ENCODE measurements at regions of chr5 and their contacts with region 1.

Region 1: GRCh38 chr5:147453875-147454814 is 55.7 kb downstream of the DPYSL3 start:
- DNase-seq: no peak
- H3K4me3 ChIP-seq: peak overlapping the region; percentile 88 to 98 (median 93)
- H3K27ac ChIP-seq: peak overlapping the region; percentile 95 to 99 (median 98)
- H3K4me1 ChIP-seq: peaks cover 31 to 78% (median 66%) of the 10 kb centered on the region in 4 donors
- H3K27me3 ChIP-seq: no peaks in the 10 kb centered on the region
- CTCF ChIP-seq: peak; percentile 79 to 96 (median 94)
- EP300 ChIP-seq: no peak
- POLR2A ChIP-seq: no peak

Region 2: GRCh38 chr5:147339313-147339712 is 114.8 kb before region 1 on chr5:
- intact Hi-C with region 1: no loop called
- DNase-seq: no peak
- H3K4me3 ChIP-seq: no peak overlapping the region
- H3K27ac ChIP-seq: no peak overlapping the region
- H3K4me1 ChIP-seq: no peaks in the 10 kb centered on the region
- H3K27me3 ChIP-seq: no peaks in the 10 kb centered on the region
- CTCF ChIP-seq: no peak
- EP300 ChIP-seq: no peak
- POLR2A ChIP-seq: no peak

Region 3: GRCh38 chr5:147403651-147404640 is 50.2 kb before region 1 on chr5:
- intact Hi-C with region 1: loop called (anchors 2 kb)
- DNase-seq: peak; percentile 93
- H3K4me3 ChIP-seq: peak overlapping the region in 2 of 4 donors; percentile 12 to 24
- H3K27ac ChIP-seq: peak overlapping the region; percentile 85 to 96 (median 92)
- H3K4me1 ChIP-seq: peaks cover 46 to 79% (median 65%) of the 10 kb centered on the region in 4 donors
- H3K27me3 ChIP-seq: no peaks in the 10 kb centered on the region
- CTCF ChIP-seq: no peak
- EP300 ChIP-seq: peak; percentile 67
- POLR2A ChIP-seq: no peak

Region 4: GRCh38 chr5:147509710-147510651 is 55.8 kb after region 1 on chr5 and contains the start of gene DPYSL3:
- intact Hi-C with region 1: loop called (anchors 2 kb)
- DNase-seq: peak; percentile 92
- H3K4me3 ChIP-seq: peak within 1 kb of the TSS; percentile 67 to 94 (median 86)
- H3K27ac ChIP-seq: peak within 1 kb of the TSS; percentile 90 to 98 (median 92)
- H3K4me1 ChIP-seq: peaks cover 4 to 34% (median 32%) of the 10 kb centered on the region in 4 donors
- H3K27me3 ChIP-seq: no peaks in the 10 kb centered on the region
- CTCF ChIP-seq: peak; percentile 33 to 58 (median 34)
- EP300 ChIP-seq: no peak
- POLR2A ChIP-seq: no peak
- total RNA-seq, gene DPYSL3: 295 to 449 (median 378) TPM

Region 5: GRCh38 chr5:147558826-147559225 is 104.7 kb after region 1 on chr5:
- intact Hi-C with region 1: loop called (anchors 1 kb)
- DNase-seq: no peak
- H3K4me3 ChIP-seq: no peak overlapping the region
- H3K27ac ChIP-seq: peak overlapping the region; percentile 62 to 87 (median 65)
- H3K4me1 ChIP-seq: peaks cover 12 to 41% (median 37%) of the 10 kb centered on the region in 4 donors
- H3K27me3 ChIP-seq: no peaks in the 10 kb centered on the region
- CTCF ChIP-seq: peak; percentile 79 to 82 (median 82)
- EP300 ChIP-seq: no peak
- POLR2A ChIP-seq: no peak

Region 6: DNA sequence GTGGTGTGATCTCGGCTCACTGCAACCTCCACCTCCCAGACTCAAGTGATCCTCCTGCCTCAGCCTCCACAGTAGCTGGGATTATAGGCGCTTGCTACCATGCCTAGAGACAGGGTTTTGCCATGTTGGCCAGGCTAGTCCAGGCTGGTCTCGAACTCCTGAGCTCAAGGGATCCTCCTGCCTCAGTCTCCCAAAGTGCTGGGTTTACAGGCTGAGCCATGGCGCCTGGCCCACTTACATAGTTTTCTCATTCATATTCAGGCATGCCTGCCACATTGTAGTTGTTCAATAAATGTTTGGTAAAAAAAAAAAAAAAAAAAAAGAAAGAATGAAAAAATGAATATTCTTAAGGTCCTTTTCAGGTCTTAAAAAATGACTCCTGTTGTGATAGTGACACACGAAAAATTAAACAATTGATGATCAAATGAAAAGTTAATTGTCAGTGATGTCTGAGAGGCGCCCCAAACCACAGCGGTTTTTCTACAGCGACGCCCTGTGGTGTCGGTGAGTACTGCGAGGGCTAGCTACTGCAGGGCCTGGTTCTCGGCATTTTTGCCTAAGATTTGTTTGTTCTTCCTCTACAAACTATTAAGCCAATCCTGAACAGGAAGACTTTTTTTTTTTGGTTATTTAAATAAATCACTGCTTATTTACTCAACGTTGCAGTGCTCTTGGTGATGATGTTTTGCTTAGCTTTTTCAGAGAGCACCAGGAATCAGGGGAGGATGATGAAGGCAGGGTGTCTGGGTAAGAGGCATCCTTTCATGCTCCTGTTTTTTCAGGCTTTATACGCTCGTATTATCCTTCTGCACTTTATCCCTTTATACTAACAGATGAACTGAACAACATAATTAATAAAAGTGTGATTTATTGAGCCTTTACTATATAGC is 122.7 kb after region 1 on chr5:
- intact Hi-C with region 1: loop called (anchors 5 kb)
- DNase-seq: peak; percentile 92
- H3K4me3 ChIP-seq: no peak overlapping the region
- H3K27ac ChIP-seq: no peak overlapping the region
- H3K4me1 ChIP-seq: peaks cover 0 to 12% (median 2%) of the 10 kb centered on the region in 4 donors
- H3K27me3 ChIP-seq: no peaks in the 10 kb centered on the region
- CTCF ChIP-seq: peak in 2 of 3 experiments; percentile 86 to 89
- EP300 ChIP-seq: no peak
- POLR2A ChIP-seq: no peak

Region 7: GRCh38 chr5:147805030-147805454 is 350.9 kb after region 1 on chr5:
- intact Hi-C with region 1: no loop called
- DNase-seq: no peak
- H3K4me3 ChIP-seq: no peak overlapping the region
- H3K27ac ChIP-seq: no peak overlapping the region
- H3K4me1 ChIP-seq: no peaks in the 10 kb centered on the region
- H3K27me3 ChIP-seq: no peaks in the 10 kb centered on the region
- CTCF ChIP-seq: no peak
- EP300 ChIP-seq: no peak
- POLR2A ChIP-seq: no peak

Measured in esophagus muscularis mucosa (tissue), 4 donors.